ENCODE measurements at regions of chr3 and their contacts with region 1.

Region 1: DNA sequence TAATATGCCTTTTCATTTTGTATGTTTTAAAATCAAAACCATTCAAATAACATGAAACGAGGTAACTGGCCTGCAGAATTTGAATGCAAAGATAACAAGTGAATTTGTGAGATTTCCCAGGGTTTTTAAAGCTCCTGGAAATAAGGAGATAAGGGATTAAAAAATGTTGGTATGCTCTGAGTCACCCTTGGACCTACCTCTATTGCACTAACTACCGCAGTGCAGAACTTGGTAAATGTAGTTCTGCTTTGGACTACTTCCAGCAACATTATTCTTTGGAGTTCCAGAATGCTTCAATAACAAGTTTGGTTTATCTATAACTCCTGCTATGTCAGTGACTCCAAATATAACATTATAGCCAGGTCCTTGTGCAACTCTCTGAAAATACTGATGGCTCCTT is 201.7 kb downstream of the GAP43 start:
- DNase-seq: no peak
- ATAC-seq: no peak
- H3K4me3 Mint-ChIP-seq: no peak overlapping the region
- H3K27ac Mint-ChIP-seq: no peak overlapping the region
- H3K4me1 Mint-ChIP-seq: no peaks in the 10 kb centered on the region
- H3K27me3 Mint-ChIP-seq: peaks cover 5% of the 10 kb centered on the region

Region 2: GRCh38 chr3:115836944-115837343 is 11.9 kb after region 1 on chr3:
- CTCF ChIA-PET with region 1: interaction called, 14 read pairs
- POLR2A ChIA-PET with region 1: no interaction called
- intact Hi-C with region 1: no loop called
- DNase-seq: no peak
- ATAC-seq: no peak
- H3K4me3 Mint-ChIP-seq: no peak overlapping the region
- H3K27ac Mint-ChIP-seq: no peak overlapping the region
- H3K4me1 Mint-ChIP-seq: no peaks in the 10 kb centered on the region
- H3K27me3 Mint-ChIP-seq: peaks cover 5% of the 10 kb centered on the region

Region 3: DNA sequence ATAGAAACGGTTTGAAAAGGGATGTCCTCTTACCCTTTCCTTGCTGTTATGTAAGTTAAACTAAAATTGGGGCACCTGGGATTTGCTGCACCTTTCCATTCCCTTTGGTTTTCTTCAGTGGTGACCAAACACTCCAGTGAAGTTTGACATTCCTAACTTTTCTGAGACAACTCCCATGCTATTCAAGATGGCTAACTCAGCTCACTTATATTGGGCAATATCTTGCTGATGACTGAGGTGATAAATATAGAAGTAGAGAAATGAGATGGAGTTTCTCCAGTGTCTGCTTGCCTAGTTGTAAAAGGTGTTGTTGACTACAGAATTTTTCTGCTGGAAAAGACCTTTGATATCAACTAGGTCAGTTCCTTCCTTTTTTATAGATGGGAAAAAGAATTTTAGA is 90.0 kb after region 1 on chr3:
- CTCF ChIA-PET with region 1: no interaction called
- POLR2A ChIA-PET with region 1: interaction called, 13 read pairs
- intact Hi-C with region 1: no loop called
- DNase-seq: no peak
- ATAC-seq: no peak
- H3K4me3 Mint-ChIP-seq: no peak overlapping the region
- H3K27ac Mint-ChIP-seq: no peak overlapping the region
- H3K4me1 Mint-ChIP-seq: no peaks in the 10 kb centered on the region
- H3K27me3 Mint-ChIP-seq: peaks cover 3% of the 10 kb centered on the region